Gastrocnemius medialis (tissue), 4 donors: ENCODE measurements at regions of chr12 and their contacts with region 1.

Region 1: GRCh38 chr12:91382081-91382543 is 199.5 kb upstream of the DCN start:
- DNase-seq: peak; percentile 43 to 51
- ATAC-seq: peak; percentile 78 to 83
- H3K4me3 ChIP-seq: peak overlapping the region; percentile 43 to 55 (median 52)
- H3K27ac ChIP-seq: peak overlapping the region; percentile 25 to 62 (median 46)
- H3K4me1 ChIP-seq: peaks cover 4 to 6% of the 10 kb centered on the region in 2 donors
- H3K27me3 ChIP-seq: no peaks in the 10 kb centered on the region
- CTCF ChIP-seq: peak; percentile 72 to 91 (median 80)
- POLR2A ChIP-seq: no peak

Region 2: GRCh38 chr12:92158796-92159439 is 776.8 kb after region 1 on chr12:
- in situ Hi-C with region 1: loop called in 1 of 4 experiments (anchors 25 kb)
- intact Hi-C with region 1: no loop called
- DNase-seq: no peak
- ATAC-seq: no peak
- H3K4me3 ChIP-seq: no peak overlapping the region
- H3K27ac ChIP-seq: peak overlapping the region in 1 of 4 donors; percentile 5
- H3K4me1 ChIP-seq: no peaks in the 10 kb centered on the region
- H3K27me3 ChIP-seq: no peaks in the 10 kb centered on the region
- CTCF ChIP-seq: no peak
- POLR2A ChIP-seq: no peak

Region 3: DNA sequence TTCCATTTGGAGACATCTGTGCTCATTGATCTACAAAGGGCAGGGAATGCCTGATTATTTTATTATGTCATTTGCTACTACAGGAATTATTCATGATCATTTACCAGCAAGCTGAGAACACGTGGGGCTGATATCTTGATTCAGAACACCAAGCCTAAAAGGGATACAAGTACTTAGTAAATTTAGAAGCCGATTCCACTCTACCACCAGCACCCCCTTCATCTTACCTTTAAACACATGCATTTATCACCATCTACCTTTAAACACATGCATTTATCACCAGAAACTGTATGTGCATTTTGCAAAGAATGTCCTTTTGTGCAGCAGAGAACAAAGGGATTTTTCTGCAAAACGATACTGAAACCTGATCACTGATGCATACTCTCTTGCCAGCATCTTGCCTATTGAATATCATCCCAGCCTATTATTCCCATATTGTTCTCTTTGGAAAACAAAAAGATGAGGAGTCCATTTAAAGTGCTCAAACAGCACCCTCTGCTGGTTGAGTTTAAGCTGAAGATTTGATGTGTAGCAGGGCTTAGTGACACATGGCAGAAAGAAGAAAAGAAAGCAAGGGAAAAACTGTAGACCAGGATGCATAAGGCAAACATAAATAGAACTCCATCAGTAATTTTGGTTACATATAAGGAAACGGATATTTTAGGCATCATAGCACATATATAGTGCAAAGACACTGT is 1188.1 kb after region 1 on chr12:
- in situ Hi-C with region 1: loop called in 2 of 4 experiments (anchors 10 to 25 kb)
- intact Hi-C with region 1: loop called (anchors 1 kb)
- DNase-seq: peak; percentile 28 to 34
- ATAC-seq: peak; percentile 58 to 73
- H3K4me3 ChIP-seq: peak overlapping the region in 1 of 4 donors; percentile 6
- H3K27ac ChIP-seq: peak overlapping the region in 3 of 4 donors; percentile 5 to 20 (median 10)
- H3K4me1 ChIP-seq: peaks cover 9 to 17% of the 10 kb centered on the region in 2 donors
- H3K27me3 ChIP-seq: no peaks in the 10 kb centered on the region
- CTCF ChIP-seq: peak; percentile 56 to 81 (median 77)
- POLR2A ChIP-seq: no peak

Region 4: GRCh38 chr12:92608151-92609091 is 1226.3 kb after region 1 on chr12:
- in situ Hi-C with region 1: no loop called
- intact Hi-C with region 1: loop called (anchors 5 kb)
- DNase-seq: no peak
- ATAC-seq: peak in 1 of 2 donors; percentile 51
- H3K4me3 ChIP-seq: no peak overlapping the region
- H3K27ac ChIP-seq: no peak overlapping the region
- H3K4me1 ChIP-seq: no peaks in the 10 kb centered on the region
- H3K27me3 ChIP-seq: no peaks in the 10 kb centered on the region
- CTCF ChIP-seq: peak in 3 of 5 experiments; percentile 10 to 28 (median 24)
- POLR2A ChIP-seq: no peak